Activated naive CD8-positive, alpha-beta T cell treated with anti-CD3 and anti-CD28 coated beads, Interleukin-2, amount 10 ng/mL, durations not matched to agents 7 days and 5 days (primary cell): ENCODE measurements at regions of chr3 and their contacts with region 1.

Region 1: GRCh38 chr3:53347261-53348064 is at the start of gene DCP1A:
- DNase-seq: peak; percentile 99
- ATAC-seq: peak; percentile 95
- H3K4me3 Mint-ChIP-seq: peak within 1 kb of the TSS; percentile 97
- H3K27ac Mint-ChIP-seq: peak within 1 kb of the TSS; percentile 99
- H3K4me1 Mint-ChIP-seq: peaks cover 24% of the 10 kb centered on the region
- H3K27me3 Mint-ChIP-seq: no peaks in the 10 kb centered on the region
- total RNA-seq, gene DCP1A: 32.5 to 34.3 TPM

Region 2: GRCh38 chr3:53227993-53228885 is 119.2 kb before region 1 on chr3:
- POLR2A ChIA-PET with region 1: no interaction called
- DNase-seq: no peak
- ATAC-seq: no peak
- H3K4me3 Mint-ChIP-seq: no peak overlapping the region
- H3K27ac Mint-ChIP-seq: no peak overlapping the region
- H3K4me1 Mint-ChIP-seq: no peaks in the 10 kb centered on the region
- H3K27me3 Mint-ChIP-seq: no peaks in the 10 kb centered on the region

Region 3: GRCh38 chr3:53255775-53256703 is 91.4 kb before region 1 on chr3 and contains the start of gene TKT:
- POLR2A ChIA-PET with region 1: interaction called, 11 read pairs
- DNase-seq: peak; percentile 86
- ATAC-seq: peak; percentile 66
- H3K4me3 Mint-ChIP-seq: peak within 1 kb of the TSS; percentile 95
- H3K27ac Mint-ChIP-seq: peak within 1 kb of the TSS; percentile 88
- H3K4me1 Mint-ChIP-seq: peaks cover 29% of the 10 kb centered on the region
- H3K27me3 Mint-ChIP-seq: peaks cover 12% of the 10 kb centered on the region
- total RNA-seq, gene TKT: 204 to 210 TPM

Region 4: GRCh38 chr3:53274938-53275605 is 72.4 kb before region 1 on chr3:
- POLR2A ChIA-PET with region 1: interaction called, 11 read pairs
- DNase-seq: no peak
- ATAC-seq: peak; percentile 96
- H3K4me3 Mint-ChIP-seq: peak overlapping the region; percentile 53
- H3K27ac Mint-ChIP-seq: peak overlapping the region; percentile 90
- H3K4me1 Mint-ChIP-seq: peaks cover 14% of the 10 kb centered on the region
- H3K27me3 Mint-ChIP-seq: peaks cover 2% of the 10 kb centered on the region

Region 5: GRCh38 chr3:53891497-53892285 is 544.2 kb after region 1 on chr3 and contains the start of gene SELENOK:
- POLR2A ChIA-PET with region 1: interaction called, 10 read pairs
- DNase-seq: peak; percentile 92
- ATAC-seq: peak; percentile 97
- H3K4me3 Mint-ChIP-seq: peak within 1 kb of the TSS; percentile 95
- H3K27ac Mint-ChIP-seq: peak within 1 kb of the TSS; percentile 99
- H3K4me1 Mint-ChIP-seq: peaks cover 39% of the 10 kb centered on the region
- H3K27me3 Mint-ChIP-seq: peaks cover 18% of the 10 kb centered on the region
- total RNA-seq, gene SELENOK: 43.2 to 43.9 TPM